Left lung (tissue), 14 donors: ENCODE measurements at regions of chr15 and their contacts with region 1.

Region 1: GRCh38 chr15:52139599-52140491 is 27.3 kb upstream of the BCL2L10 start:
- DNase-seq: peak; percentile 36 to 82 (median 67)
- ATAC-seq: peak; percentile 82
- H3K4me3 ChIP-seq: no peak overlapping the region
- H3K27ac ChIP-seq: no peak overlapping the region
- H3K4me1 ChIP-seq: peaks cover 0 to 33% of the 10 kb centered on the region in 2 donors
- H3K27me3 ChIP-seq: no peaks in the 10 kb centered on the region
- CTCF ChIP-seq: peak; percentile 67 to 68

Region 2: DNA sequence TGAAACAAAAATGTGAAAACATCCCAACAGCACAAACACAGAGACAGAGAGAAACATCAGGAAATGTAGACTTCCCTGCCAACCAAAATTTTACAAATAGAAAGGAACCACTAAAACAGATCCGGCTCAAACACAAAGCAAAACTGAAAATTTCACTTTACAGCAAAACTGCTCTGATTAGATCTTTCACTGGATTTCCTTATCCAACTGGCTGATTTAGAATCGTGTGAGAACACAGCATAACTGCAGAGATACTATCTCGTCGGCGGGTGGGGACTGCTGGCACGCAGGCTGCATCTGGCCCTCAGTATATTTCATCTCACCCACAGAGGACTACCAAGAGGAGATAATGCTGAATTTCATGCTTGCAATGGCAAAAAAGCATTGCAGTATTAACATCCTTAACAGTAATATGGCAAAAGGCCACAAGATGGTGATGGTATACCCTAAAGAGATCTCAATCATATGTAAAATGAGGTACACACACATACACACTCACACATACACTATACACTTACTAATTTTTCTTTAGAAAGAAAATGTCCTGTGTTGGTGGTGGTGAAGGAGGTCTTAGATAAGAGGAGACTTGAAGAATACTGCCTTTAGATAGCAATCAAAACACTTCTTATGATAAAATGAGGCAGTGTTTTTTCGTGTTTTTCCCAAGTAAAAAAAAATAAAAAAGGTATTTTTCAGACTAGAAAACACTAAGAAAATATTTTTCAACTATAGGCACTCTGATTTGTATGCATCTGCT is 157.7 kb before region 1 on chr15:
- intact Hi-C with region 1: loop called in 1 of 2 experiments (anchors 5 kb)
- DNase-seq: peak in 2 of 4 donors; percentile 29 to 56
- ATAC-seq: peak; percentile 91
- H3K4me3 ChIP-seq: peak overlapping the region in 1 of 2 donors; percentile 11
- H3K27ac ChIP-seq: peak overlapping the region; percentile 21 to 41
- H3K4me1 ChIP-seq: peaks cover 0 to 18% of the 10 kb centered on the region in 2 donors
- H3K27me3 ChIP-seq: no peaks in the 10 kb centered on the region
- CTCF ChIP-seq: peak; percentile 38 to 49

Region 3: GRCh38 chr15:52200831-52201365 is 61.1 kb after region 1 on chr15:
- intact Hi-C with region 1: no loop called
- DNase-seq: no peak
- ATAC-seq: no peak
- H3K4me3 ChIP-seq: no peak overlapping the region
- H3K27ac ChIP-seq: no peak overlapping the region
- H3K4me1 ChIP-seq: no peaks in the 10 kb centered on the region
- H3K27me3 ChIP-seq: no peaks in the 10 kb centered on the region
- CTCF ChIP-seq: no peak